CD8-positive, alpha-beta T cell (primary cell): ENCODE measurements at regions of chr18 and their contacts with region 1.

Region 1: DNA sequence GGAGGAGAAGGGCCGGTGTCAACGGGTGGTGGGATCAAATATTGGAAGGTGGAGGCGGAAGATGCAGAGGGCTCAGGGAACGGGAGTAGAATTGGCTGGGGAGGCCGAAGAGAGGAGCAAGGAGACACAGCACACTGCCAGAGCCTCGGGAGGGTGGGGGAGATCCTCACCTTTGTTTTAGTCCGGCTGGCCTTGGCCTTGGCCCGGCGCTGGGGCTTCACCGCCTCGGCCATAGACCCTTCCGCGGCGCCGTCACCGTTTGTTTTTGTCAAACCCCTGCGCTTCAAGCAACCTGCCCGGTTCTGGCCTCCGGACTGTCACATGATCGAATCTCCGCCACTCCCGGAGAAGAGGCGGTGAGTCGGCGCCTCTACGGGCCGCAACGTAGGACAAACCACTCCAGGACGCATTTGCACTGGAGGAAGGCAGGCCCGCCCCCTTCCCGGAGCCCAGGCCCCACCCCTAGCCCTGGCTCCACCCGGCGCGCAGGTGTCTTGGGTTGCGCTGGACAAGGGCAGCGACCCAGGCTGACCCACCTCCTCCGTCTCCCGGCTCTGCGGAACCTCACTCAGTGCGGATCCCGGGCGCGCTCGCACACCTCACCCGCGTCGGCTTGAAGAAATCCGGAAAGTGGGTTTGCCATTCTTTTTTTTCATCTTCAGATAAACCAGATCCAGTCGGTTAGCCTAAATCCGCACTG is at the start of gene EPG5:
- DNase-seq: peak; percentile 75 to 94 (median 90)
- ATAC-seq: peak; percentile 91
- H3K4me3 ChIP-seq: peak within 1 kb of the TSS; percentile 79 to 91
- H3K4me3 Mint-ChIP-seq: peak within 1 kb of the TSS; percentile 98
- H3K27ac ChIP-seq: peak within 1 kb of the TSS; percentile 68 to 74
- H3K27ac Mint-ChIP-seq: peak within 1 kb of the TSS; percentile 91
- H3K4me1 ChIP-seq: peaks cover 33% of the 10 kb centered on the region
- H3K4me1 Mint-ChIP-seq: peaks cover 46% of the 10 kb centered on the region
- H3K27me3 ChIP-seq: no peaks in the 10 kb centered on the region
- H3K27me3 Mint-ChIP-seq: no peaks in the 10 kb centered on the region
- CTCF ChIP-seq: no peak
- total RNA-seq, gene EPG5: 29.1 to 35.5 TPM

Region 2: GRCh38 chr18:45938488-45938935 is 28.6 kb before region 1 on chr18:
- CTCF ChIA-PET with region 1: no interaction called
- POLR2A ChIA-PET with region 1: no interaction called
- intact Hi-C with region 1: loop called in 1 of 2 experiments (anchors 2 kb)
- DNase-seq: peak in 2 of 9 experiments; percentile 75 to 85
- ATAC-seq: peak; percentile 84
- H3K4me3 ChIP-seq: no peak overlapping the region
- H3K4me3 Mint-ChIP-seq: no peak overlapping the region
- H3K27ac ChIP-seq: peak overlapping the region in 1 of 2 experiments; percentile 26
- H3K27ac Mint-ChIP-seq: peak overlapping the region; percentile 1
- H3K4me1 ChIP-seq: peaks cover 6% of the 10 kb centered on the region
- H3K4me1 Mint-ChIP-seq: peaks cover 21% of the 10 kb centered on the region
- H3K27me3 ChIP-seq: no peaks in the 10 kb centered on the region
- H3K27me3 Mint-ChIP-seq: no peaks in the 10 kb centered on the region
- CTCF ChIP-seq: no peak

Region 3: GRCh38 chr18:46028536-46028891 is 61.4 kb after region 1 on chr18:
- CTCF ChIA-PET with region 1: no interaction called
- POLR2A ChIA-PET with region 1: interaction called, 3 read pairs
- intact Hi-C with region 1: loop called (anchors 5 kb)
- DNase-seq: no peak
- ATAC-seq: no peak
- H3K4me3 ChIP-seq: peak overlapping the region; percentile 66 to 75
- H3K4me3 Mint-ChIP-seq: peak overlapping the region; percentile 94
- H3K27ac ChIP-seq: no peak overlapping the region
- H3K27ac Mint-ChIP-seq: peak overlapping the region; percentile 68
- H3K4me1 ChIP-seq: no peaks in the 10 kb centered on the region
- H3K4me1 Mint-ChIP-seq: peaks cover 9% of the 10 kb centered on the region
- H3K27me3 ChIP-seq: no peaks in the 10 kb centered on the region
- H3K27me3 Mint-ChIP-seq: no peaks in the 10 kb centered on the region
- CTCF ChIP-seq: no peak

Region 4: DNA sequence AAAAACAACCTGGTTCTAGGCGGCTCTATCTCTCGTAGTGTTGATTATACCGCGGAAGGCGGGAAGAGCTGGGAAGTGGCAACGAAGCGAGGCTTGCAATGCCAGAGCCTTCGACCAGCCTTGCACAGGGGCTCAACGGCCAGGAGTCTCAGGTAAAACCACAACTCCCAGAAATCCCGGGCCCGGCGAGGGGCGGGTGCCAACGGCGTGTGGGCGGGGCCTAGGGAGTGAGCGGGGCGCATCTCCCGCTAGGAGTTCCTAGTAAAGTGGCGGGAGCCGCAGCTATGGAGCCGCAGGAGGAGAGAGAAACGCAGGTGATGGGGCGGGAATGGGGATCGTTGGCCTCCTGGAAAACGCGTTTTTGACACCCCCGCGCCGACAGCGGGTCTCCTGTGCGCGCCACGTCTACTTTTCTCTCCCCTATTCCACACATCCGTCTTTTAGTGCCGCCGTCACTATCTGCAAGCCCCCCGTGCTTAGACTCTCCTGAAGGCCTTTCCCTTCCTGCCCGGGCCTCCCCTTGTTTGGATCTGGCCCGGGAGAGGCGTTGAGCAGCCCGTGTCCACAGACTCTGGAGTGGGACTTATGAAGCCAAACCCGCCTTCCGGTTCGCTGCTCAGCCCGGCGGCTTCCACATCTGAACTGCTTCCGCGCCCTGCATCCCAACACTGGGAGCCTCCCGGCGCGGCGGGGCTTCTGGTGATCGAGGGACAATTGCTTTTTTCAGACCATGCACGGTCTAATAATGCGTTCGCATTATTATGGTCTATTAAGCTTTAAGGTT is 137.2 kb after region 1 on chr18 and contains the start of gene HAUS1:
- CTCF ChIA-PET with region 1: no interaction called
- POLR2A ChIA-PET with region 1: no interaction called
- intact Hi-C with region 1: loop called in 1 of 2 experiments (anchors 1 kb)
- DNase-seq: peak; percentile 42 to 88 (median 81)
- ATAC-seq: peak; percentile 95
- H3K4me3 ChIP-seq: peak within 1 kb of the TSS; percentile 87 to 90
- H3K4me3 Mint-ChIP-seq: peak within 1 kb of the TSS; percentile 96
- H3K27ac ChIP-seq: peak within 1 kb of the TSS; percentile 42 to 52
- H3K27ac Mint-ChIP-seq: peak within 1 kb of the TSS; percentile 88
- H3K4me1 ChIP-seq: peaks cover 12% of the 10 kb centered on the region
- H3K4me1 Mint-ChIP-seq: peaks cover 31% of the 10 kb centered on the region
- H3K27me3 ChIP-seq: no peaks in the 10 kb centered on the region
- H3K27me3 Mint-ChIP-seq: no peaks in the 10 kb centered on the region
- CTCF ChIP-seq: no peak
- total RNA-seq, gene HAUS1: 6.3 to 8.8 TPM